Heart right ventricle (tissue), 16 donors: ENCODE measurements at regions of chr6 and their contacts with region 1.

Region 1: GRCh38 chr6:163965426-163966348 is 551.2 kb downstream of the QKI start:
- DNase-seq: peak; percentile 27 to 59
- ATAC-seq: peak; percentile 23 to 66 (median 56)
- H3K4me3 ChIP-seq: no peak overlapping the region
- H3K27ac ChIP-seq: peak overlapping the region; percentile 69 to 94 (median 90)
- H3K4me1 ChIP-seq: peaks cover 0 to 50% (median 19%) of the 10 kb centered on the region in 9 donors
- H3K27me3 ChIP-seq: no peaks in the 10 kb centered on the region
- CTCF ChIP-seq: no peak

Region 2: DNA sequence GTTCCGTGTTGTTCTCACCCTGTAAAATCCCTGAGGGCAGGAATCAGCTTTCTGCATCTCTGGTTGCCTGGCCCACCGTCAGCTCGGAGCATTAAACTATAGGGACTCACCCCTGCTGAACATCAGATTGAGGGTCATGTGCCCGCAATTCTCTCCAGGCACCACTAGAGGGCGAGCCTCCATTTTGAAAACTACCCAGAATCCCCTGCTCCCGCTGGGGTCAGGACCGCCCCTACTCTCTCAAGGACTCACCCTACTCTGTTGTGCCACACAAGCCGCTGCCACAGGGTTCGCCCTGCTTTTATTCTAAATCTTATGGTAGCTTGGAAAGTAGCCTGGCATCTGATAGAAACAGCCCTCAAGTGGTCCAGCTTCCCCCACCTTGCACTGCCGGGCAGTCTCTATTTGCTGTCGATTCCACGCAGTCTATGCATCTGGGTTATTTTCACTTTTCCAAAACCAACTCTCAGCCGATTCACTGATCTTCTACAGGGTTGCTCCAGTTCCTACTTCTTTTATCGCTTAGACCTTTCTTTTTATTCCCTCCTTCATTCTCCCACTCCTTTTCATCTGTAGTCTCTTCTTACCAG is 795.3 kb before region 1 on chr6:
- intact Hi-C with region 1: loop called in 1 of 10 experiments (anchors 10 kb)
- DNase-seq: no peak
- ATAC-seq: peak in 1 of 8 donors; percentile 37
- H3K4me3 ChIP-seq: no peak overlapping the region
- H3K27ac ChIP-seq: no peak overlapping the region
- H3K4me1 ChIP-seq: no peaks in the 10 kb centered on the region
- H3K27me3 ChIP-seq: no peaks in the 10 kb centered on the region
- CTCF ChIP-seq: peak; percentile 16 to 69 (median 55)

Region 3: DNA sequence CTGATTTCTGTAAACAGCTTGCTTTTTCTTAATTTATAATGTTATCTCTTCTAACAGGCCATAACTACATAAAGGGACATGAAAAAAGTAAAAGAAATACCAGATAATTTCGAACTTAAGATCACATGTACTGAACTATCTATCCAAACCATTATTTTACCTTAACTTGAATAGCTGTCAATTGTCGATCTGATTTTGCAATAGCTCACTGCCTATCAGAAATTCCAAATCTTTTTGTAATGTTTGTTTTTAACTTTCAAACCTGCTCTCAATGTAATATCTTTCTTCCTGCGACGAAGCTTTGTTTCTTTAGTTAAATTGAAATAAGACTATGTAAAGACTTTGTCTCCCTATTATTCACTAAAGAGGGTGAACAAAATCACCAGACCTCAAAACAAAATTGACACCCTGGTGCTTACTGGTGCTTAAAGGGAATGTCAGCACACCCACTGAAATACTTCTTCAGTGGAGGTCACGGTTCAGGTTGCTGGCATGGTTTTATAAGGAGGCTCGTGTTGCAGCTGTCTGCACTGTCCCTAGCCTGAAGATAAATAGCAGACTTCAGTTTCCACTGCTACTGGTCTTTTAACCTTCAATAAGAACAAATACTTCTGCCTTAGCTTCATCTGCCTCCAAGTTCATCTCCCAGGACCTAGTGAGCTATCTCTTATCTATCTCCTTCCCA is 668.7 kb before region 1 on chr6:
- intact Hi-C with region 1: no loop called
- DNase-seq: no peak
- ATAC-seq: peak; percentile 57 to 88 (median 76)
- H3K4me3 ChIP-seq: no peak overlapping the region
- H3K27ac ChIP-seq: peak overlapping the region in 8 of 10 donors; percentile 13 to 71 (median 40)
- H3K4me1 ChIP-seq: peaks cover 0 to 34% (median 8%) of the 10 kb centered on the region in 9 donors
- H3K27me3 ChIP-seq: no peaks in the 10 kb centered on the region
- CTCF ChIP-seq: no peak

Region 4: GRCh38 chr6:163579880-163580295 is 385.8 kb before region 1 on chr6:
- intact Hi-C with region 1: loop called in 1 of 10 experiments (anchors 5 kb)
- DNase-seq: no peak
- ATAC-seq: peak in 5 of 8 donors; percentile 30 to 46 (median 35)
- H3K4me3 ChIP-seq: no peak overlapping the region
- H3K27ac ChIP-seq: peak overlapping the region in 7 of 10 donors; percentile 3 to 51 (median 25)
- H3K4me1 ChIP-seq: peaks cover 0 to 48% (median 17%) of the 10 kb centered on the region in 9 donors
- H3K27me3 ChIP-seq: no peaks in the 10 kb centered on the region
- CTCF ChIP-seq: peak in 3 of 9 donors; percentile 37 to 47 (median 41)

Region 5: GRCh38 chr6:163745536-163746400 is 219.9 kb before region 1 on chr6:
- intact Hi-C with region 1: loop called in 2 of 10 experiments (anchors 2 to 5 kb)
- DNase-seq: peak; percentile 52 to 71
- ATAC-seq: peak; percentile 83 to 95 (median 92)
- H3K4me3 ChIP-seq: no peak overlapping the region
- H3K27ac ChIP-seq: peak overlapping the region; percentile 36 to 87 (median 65)
- H3K4me1 ChIP-seq: peaks cover 8 to 59% (median 25%) of the 10 kb centered on the region in 9 donors
- H3K27me3 ChIP-seq: no peaks in the 10 kb centered on the region
- CTCF ChIP-seq: no peak

Region 6: DNA sequence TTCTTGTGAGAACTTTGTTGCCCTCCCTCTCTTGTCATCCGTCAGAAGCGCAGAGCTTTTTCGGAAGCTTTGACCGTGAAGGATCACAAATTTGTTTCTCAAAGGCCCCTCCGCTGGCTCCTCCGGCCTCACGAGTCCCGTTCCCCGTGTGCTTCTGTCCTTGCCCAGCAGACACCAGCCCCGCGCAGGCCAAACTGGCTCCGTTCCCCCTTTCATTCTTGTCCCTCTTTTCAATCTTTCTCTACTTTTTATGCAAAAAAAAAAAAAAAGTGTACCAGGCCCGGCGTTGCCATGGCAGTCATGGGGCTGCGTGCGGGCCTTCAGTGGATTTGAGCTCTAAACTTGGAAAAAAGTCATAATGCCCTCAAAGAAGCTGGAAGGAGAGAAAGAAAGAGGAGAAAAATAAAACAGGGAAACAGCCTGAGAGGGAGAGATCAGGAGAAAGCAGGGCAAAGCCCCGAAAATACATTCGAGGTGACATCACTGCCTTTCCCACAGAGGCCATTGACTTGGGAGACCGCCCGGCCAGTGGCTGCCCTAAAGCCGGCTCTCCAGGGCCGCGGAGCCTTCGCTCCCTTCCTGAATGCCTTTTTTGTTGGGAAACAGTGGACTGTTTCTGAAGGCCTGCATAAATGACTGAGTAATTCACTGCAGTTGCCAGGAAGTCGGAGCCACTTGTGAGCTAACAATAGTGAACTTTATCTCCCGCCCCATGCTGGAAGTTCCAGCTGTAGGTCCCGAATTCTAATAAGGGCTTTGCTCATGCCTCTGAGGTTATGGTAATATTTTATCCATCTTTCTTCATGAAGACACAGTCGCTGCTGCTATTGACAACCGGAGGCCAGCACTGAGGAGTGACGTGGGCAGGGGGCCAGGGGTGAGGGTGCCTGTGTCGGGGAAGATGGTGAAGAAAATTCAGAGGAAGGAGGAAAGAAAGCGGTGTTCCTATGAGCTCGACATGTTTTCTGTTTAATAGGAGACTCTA is 119.7 kb after region 1 on chr6:
- intact Hi-C with region 1: loop called in 1 of 10 experiments (anchors 5 kb)
- DNase-seq: peak; percentile 81 to 85
- ATAC-seq: peak; percentile 90 to 97 (median 95)
- H3K4me3 ChIP-seq: peak overlapping the region in 5 of 10 donors; percentile 16 to 42 (median 24)
- H3K27ac ChIP-seq: peak overlapping the region; percentile 86 to 93 (median 92)
- H3K4me1 ChIP-seq: peaks cover 9 to 27% (median 20%) of the 10 kb centered on the region in 9 donors
- H3K27me3 ChIP-seq: no peaks in the 10 kb centered on the region
- CTCF ChIP-seq: no peak

Region 7: DNA sequence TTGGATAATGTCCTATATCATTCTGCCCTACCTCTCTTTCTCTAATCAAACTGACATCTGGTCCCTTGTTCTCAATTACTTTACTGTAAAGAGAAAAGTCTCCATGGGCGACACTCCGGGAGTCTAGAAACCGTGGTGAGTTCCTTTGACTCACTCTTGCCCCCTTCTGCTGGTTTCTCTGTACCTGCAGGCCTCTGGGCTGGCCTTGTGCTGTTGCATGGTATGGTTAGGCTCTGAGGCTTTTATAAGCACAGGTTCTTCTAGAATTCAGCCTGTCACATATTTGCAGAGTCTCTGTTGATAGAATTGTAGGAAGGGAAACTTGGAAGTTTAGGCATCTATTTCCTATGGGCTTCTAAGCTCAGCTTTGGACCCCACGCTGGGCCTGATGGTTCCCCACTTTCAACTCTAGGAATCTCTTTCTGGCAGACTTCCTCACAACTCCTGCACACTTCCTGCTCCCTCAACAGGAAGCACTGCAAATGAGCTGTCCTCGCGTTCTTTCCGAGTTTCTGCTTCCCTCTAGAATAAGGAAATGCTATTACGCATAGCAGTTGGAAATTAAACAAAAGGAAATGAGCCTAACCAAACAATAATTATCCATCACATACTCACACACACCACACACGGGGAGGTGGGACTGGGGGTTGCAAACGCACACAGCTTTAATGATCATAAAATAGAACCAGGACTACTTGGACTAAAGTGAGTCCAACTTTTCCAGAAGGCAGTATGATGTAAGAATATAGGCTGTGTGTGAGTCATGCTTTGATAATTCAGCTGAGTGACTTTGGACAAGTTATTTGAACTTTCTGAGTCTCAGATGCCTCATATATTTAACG is 132.1 kb after region 1 on chr6:
- intact Hi-C with region 1: loop called in 3 of 10 experiments (anchors 1 to 10 kb)
- DNase-seq: peak in 1 of 2 donors; percentile 58
- ATAC-seq: peak; percentile 52 to 87 (median 70)
- H3K4me3 ChIP-seq: no peak overlapping the region
- H3K27ac ChIP-seq: peak overlapping the region; percentile 44 to 88 (median 80)
- H3K4me1 ChIP-seq: peaks cover 0 to 44% (median 36%) of the 10 kb centered on the region in 9 donors
- H3K27me3 ChIP-seq: no peaks in the 10 kb centered on the region
- CTCF ChIP-seq: peak in 7 of 9 donors; percentile 41 to 68 (median 48)